Activated T-helper 1 cell treated with anti-CD3 and anti-CD28 coated beads, Interleukin-12 subunit alpha, Interleukin-12 subunit beta, Interleukin-2, Interleukin-4 antibody, amounts not matched to agents 30 ng/mL and 10 ng/mL and 1 ng/mL, durations not matched to agents 14 hours and 24 hours and 36 hours (primary cell): ENCODE measurements at regions of chr22 and their contacts with region 1.

Region 1: GRCh38 chr22:39520054-39520891 is at the start of gene ATF4:
- DNase-seq: peak; percentile 96
- H3K4me3 Mint-ChIP-seq: peak within 1 kb of the TSS; percentile 97
- H3K27ac Mint-ChIP-seq: peak within 1 kb of the TSS; percentile 100
- H3K4me1 Mint-ChIP-seq: peaks cover 60% of the 10 kb centered on the region
- H3K27me3 Mint-ChIP-seq: peaks cover 2% of the 10 kb centered on the region
- total RNA-seq, gene ATF4: 387 and 390 TPM in 2 replicates

Region 2: GRCh38 chr22:39395936-39396796 is 124.1 kb before region 1 on chr22:
- intact Hi-C with region 1: loop called (anchors 1 kb)
- DNase-seq: no peak
- H3K4me3 Mint-ChIP-seq: no peak overlapping the region
- H3K27ac Mint-ChIP-seq: no peak overlapping the region
- H3K4me1 Mint-ChIP-seq: peaks cover 2% of the 10 kb centered on the region
- H3K27me3 Mint-ChIP-seq: peaks cover 6% of the 10 kb centered on the region

Region 3: DNA sequence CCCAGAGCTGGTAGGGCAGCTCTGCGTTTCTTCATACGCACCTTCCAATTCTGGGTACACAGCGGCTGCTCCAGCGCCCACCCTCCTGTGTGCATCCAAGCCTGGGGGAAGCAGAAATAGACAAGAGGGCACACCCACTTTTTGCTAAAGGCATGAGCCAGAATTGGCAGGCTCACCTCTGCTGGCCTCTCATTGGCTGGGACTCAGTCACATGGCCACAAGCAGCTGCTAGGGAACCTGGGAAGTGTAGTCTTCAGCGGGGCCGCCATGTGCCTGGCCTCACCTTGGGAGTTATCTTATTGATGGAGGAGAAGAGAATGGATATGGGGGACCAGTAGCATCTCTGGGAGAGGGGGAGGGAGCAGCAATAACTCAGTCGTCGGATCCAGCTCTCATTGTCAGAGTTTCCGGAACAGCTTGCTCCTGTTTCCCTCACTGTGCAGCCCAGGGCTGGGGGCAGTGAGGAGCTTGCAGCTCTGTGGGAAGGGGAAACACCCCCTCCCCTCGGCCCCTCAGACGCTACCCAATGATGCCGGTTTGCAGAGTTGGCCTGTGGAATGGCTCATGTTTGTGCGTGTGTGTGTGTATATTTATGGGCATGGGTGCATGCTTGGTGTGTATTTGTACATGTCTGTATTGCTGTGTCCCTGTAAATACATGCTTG is 30.0 kb before region 1 on chr22:
- intact Hi-C with region 1: loop called (anchors 1 kb)
- DNase-seq: peak; percentile 70
- H3K4me3 Mint-ChIP-seq: no peak overlapping the region
- H3K27ac Mint-ChIP-seq: peak overlapping the region; percentile 76
- H3K4me1 Mint-ChIP-seq: peaks cover 25% of the 10 kb centered on the region
- H3K27me3 Mint-ChIP-seq: peaks cover 2% of the 10 kb centered on the region

Region 4: DNA sequence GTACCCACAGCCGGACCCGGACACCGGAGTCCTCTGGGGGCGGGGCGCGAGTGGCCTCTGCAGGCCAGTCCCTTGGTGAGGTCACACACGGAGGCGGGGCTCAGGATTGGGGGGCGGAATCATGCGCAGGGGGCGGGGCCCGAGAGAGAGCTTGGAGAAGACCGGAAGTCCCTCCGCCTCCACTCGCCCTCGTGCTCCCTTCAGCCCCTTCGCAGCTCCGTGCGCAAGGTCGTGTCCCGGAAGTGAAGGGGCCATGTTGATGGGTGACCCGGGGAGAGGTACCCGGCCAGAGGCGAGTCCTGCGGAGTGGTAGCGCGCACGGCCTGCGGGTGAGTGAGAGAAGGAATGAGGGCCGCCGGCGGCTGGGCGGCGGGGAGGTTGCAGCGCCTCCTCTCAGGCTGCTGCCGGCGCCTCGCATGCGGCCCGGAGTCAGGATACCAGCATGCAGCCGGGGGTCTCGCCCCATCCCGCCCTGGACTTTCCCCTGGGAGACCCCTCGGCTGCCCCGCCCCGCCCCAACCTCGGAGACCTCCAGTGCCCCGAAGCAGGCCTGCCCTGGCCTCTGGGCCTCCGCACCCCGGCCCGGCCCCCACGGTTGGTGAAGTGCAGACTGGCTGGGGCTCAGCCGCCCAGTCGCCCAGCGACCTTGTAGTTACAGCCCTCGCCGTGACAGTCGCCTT is 18.0 kb before region 1 on chr22 and contains the start of gene MIEF1:
- intact Hi-C with region 1: loop called (anchors 1 kb)
- DNase-seq: peak; percentile 89
- H3K4me3 Mint-ChIP-seq: peak within 1 kb of the TSS; percentile 99
- H3K27ac Mint-ChIP-seq: peak within 1 kb of the TSS; percentile 96
- H3K4me1 Mint-ChIP-seq: peaks cover 34% of the 10 kb centered on the region
- H3K27me3 Mint-ChIP-seq: peaks cover 5% of the 10 kb centered on the region
- total RNA-seq, gene MIEF1: 59.4 and 60.2 TPM in 2 replicates

Region 5: GRCh38 chr22:40044102-40044869 is 524.0 kb after region 1 on chr22:
- intact Hi-C with region 1: loop called (anchors 1 kb)
- DNase-seq: peak; percentile 98
- H3K4me3 Mint-ChIP-seq: peak overlapping the region; percentile 90
- H3K27ac Mint-ChIP-seq: peak overlapping the region; percentile 100
- H3K4me1 Mint-ChIP-seq: peaks cover 17% of the 10 kb centered on the region
- H3K27me3 Mint-ChIP-seq: peaks cover 3% of the 10 kb centered on the region